ENCODE measurements at regions of chr7 and their contacts with region 1.

Region 1: DNA sequence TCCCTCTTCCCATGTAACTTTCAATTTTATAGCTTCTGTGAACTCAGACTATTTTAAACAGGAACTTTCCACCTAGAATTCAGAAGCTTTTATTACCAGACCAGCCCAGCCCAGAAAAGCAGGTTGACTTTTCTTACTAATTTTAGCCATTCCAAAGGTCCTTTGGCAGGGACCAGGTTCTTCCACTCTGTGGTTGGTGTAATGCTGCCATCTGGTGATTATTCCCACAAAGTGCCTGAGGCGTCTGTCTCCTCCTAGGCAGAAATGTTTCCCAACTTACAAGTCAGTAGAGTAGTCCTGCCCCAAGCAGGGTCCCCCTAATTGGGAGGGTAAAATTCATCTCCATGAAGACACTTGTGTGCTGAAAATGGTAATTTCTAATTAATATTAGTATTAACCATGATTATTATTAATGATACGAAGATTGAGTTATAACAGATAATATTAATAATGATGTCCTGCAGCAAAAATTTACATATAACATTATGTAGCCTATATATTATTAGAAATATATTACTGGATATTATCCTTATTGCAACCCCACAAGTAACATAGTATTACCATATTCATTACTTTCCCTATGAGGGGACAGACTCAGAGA is 53.0 kb upstream of the PPP1R17 start:
- DNase-seq: no peak

Region 2: DNA sequence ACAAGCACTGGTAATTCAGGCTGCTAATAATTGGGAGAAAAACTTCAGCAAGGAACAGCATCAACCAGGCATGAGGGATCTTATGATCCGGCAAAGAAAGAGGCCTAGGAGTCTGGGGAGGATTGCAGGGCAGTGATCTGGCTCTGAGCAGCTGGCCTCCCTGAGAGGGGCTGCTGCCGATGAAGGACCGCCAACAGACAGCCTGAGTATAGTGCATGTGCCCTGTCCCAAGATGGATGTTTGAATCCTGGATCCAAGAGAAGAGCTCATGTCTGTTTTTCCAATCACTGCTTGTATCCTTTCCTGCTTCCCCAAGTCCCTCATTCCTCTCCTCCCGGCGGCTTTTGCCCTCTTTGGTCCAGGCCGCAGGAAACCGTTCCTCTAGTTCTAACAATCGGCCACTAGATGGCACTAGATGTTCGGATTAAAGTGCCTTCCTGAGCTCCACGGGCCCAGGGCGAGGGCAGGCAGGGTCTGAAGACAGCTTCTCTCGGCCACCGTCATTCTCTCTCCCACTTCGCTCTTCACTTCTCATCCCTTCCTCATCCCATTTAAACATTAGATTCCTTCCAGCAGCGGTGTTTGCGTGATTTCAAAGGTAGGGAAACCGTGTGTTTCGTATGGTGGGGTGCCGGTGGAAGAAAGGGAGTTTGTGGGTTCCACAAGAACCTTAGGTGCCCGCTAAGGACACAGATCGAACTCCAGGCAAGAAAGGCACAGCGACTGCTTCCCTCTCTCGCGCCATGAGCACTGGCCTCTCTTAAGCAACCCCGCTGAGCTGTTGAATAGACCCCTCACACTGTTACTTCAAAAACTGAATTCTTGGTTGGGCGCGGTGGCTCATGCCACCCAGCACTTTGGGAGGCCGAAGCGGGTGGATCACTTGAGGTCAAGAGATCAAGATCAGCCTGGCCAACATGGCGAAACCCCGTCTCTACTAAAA is 499.5 kb before region 1 on chr7:
- intact Hi-C with region 1: loop called (anchors 2 kb)
- DNase-seq: no peak

Region 3: DNA sequence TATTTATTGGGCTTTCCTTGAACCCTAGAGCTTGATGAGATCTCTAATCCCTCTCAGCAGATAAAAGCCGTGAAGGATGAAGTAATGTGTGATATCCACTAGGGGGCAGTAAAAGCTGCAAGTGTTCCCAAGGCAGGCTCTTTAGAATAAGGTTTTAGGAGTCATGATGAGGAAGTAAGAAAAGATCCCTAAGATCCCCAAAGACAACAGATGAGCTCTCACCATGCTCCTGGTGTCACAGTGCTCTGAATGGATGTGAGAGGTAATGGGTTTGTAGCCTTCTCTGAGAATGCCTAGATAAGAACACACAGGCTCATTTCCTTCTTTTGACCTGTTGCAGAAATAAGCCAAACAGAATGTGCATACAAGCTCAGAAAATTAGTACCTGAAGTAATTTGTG is 190.5 kb before region 1 on chr7:
- intact Hi-C with region 1: loop called (anchors 2 kb)
- DNase-seq: no peak

Region 4: GRCh38 chr7:31455844-31456243 is 178.2 kb before region 1 on chr7:
- intact Hi-C with region 1: no loop called
- DNase-seq: no peak

Measured in cardiac septum (tissue), 1 donor.